ENCODE measurements at regions of chr1 and their contacts with region 1.

Region 1: DNA sequence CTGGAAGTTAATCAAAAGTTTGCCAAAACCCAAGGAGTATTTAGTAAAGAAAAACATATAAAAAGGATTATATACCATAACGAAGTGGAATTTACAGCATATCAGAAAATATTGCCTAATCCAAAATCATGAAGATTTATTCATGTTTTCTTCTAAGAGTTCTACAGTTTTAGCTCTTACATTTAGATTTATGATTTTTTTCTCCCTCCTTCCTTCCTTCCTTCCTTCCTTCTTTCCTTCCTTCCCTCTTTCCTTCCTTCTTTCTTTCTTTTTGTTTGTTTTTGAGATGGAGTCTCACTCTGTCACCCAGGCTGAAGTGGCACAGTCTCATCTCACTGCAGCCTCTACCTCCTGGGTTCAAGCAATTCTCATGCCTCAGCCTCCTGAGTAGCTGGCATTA is 15.7 kb upstream of the PRSS38 start:
- DNase-seq: no peak
- ATAC-seq: no peak
- H3K4me3 Mint-ChIP-seq: no peak overlapping the region
- H3K27ac Mint-ChIP-seq: no peak overlapping the region
- H3K4me1 Mint-ChIP-seq: no peaks in the 10 kb centered on the region
- H3K27me3 Mint-ChIP-seq: peaks cover 6% of the 10 kb centered on the region
- CTCF ChIP-seq: no peak

Region 2: GRCh38 chr1:227576189-227576588 is 223.6 kb before region 1 on chr1:
- CTCF ChIA-PET with region 1: no interaction called
- POLR2A ChIA-PET with region 1: interaction called, 13 read pairs
- intact Hi-C with region 1: no loop called
- DNase-seq: no peak
- ATAC-seq: no peak
- H3K4me3 Mint-ChIP-seq: no peak overlapping the region
- H3K27ac Mint-ChIP-seq: no peak overlapping the region
- H3K4me1 Mint-ChIP-seq: peaks cover 45% of the 10 kb centered on the region
- H3K27me3 Mint-ChIP-seq: no peaks in the 10 kb centered on the region
- CTCF ChIP-seq: no peak

Region 3: DNA sequence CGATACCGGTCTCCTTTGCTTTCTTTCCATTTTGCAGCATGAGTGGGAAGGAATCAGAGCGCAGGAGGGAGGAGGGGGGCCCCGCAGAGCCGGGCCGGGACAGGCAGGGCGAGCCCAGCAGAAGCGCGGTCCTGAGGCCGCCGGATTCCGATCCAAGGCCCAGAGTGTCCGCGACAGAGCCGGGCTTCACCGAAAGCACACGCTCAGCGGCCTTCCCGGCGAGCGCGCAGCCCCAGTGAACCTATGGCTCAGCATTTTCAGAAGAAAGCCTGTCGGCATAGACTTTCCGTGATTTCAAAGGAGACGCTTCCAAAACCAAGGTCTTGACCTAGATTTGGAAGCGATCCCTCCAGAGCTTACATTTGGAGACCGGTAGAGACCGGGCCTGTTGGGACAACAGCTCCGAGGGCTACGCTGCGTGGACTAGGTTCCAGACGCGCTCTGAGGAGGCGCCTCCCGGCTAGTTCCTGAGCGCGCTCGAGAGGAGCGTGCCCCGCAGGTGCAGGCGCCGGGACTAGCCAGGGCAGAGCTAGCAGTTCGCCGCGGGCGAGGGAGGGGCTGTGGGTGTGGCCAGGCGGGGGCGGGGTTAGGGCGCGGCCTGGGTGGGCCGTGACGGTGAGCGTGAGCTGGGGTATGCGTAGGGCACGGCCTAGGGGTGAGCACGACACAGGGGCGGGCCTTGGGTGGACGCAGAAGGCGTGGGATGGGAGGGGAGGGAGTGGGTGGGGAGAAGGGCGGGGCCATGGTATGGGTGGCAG is 12.1 kb before region 1 on chr1:
- CTCF ChIA-PET with region 1: no interaction called
- POLR2A ChIA-PET with region 1: no interaction called
- intact Hi-C with region 1: no loop called
- DNase-seq: peak; percentile 83
- ATAC-seq: peak; percentile 93
- H3K4me3 Mint-ChIP-seq: peak overlapping the region; percentile 86
- H3K27ac Mint-ChIP-seq: peak overlapping the region; percentile 61
- H3K4me1 Mint-ChIP-seq: peaks cover 22% of the 10 kb centered on the region
- H3K27me3 Mint-ChIP-seq: no peaks in the 10 kb centered on the region
- CTCF ChIP-seq: no peak

Measured in activated B cell treated with CpG ODN at 0.5 μM for 24 hours (primary cell).